ENCODE measurements at regions of chr6 and their contacts with region 1.

Region 1: DNA sequence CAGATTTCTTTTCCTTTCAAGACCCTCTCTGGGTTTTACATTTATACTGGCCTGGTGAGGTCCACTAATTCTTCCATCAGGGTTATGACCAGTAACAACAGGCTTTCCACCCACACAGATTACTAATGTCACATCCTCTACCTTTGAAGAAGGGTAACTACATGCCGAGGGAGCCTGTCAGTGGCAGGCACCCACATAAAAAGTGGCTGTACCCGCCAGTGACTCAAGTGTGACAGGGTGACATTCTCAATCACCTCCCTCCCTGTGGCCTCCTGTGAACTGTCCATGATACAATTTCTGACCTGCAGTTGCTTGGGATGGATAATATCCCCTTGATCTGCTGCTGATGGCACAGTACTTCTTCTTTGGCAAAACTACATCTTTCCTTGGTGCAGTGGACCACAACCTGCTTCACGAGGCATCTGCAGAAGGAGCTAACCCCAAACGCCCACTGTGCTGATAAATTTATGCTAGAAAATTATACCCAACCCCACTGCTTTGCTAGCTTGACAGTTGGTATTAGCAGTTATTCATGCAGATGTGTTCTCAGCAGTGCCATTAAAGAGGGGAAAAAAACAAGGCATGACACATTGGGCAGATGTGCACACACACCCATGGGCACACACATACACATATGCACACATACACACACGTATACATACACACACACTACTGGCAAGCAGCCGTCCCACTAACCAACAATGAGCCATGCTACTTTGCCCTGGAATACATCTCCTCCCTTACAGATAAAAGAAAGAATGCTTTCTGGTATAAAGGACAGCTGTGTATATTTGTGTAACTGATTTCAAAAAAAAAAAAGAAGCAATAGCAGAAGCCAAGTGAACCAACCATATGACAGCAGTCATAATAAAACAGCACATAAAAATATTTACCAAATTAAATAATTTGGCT is 20.8 kb downstream of the GFOD1 start:
- H3K4me3 Mint-ChIP-seq: peak overlapping the region; percentile 23
- H3K27ac Mint-ChIP-seq: peak overlapping the region; percentile 92
- H3K4me1 Mint-ChIP-seq: peaks cover 88% of the 10 kb centered on the region
- H3K27me3 Mint-ChIP-seq: no peaks in the 10 kb centered on the region

Region 2: DNA sequence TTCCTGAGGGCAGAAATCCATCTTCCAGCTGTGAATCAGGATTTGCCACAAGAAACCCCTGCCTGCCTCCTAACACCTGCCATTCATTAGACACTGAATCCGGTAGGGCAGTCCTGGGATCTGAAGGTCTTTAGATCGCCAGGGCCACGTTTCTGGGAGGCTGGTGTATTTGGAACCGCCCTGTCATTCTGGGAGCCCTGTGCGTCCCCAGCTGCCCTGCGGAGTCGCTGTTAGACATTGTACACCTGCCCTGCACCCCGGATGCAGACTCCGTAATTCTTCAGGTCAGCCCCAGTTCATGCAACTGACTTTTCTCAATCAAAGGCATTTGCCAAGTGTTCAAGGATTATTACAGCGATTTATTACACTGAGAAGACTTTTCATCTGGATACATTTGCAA is 331.4 kb before region 1 on chr6:
- intact Hi-C with region 1: no loop called
- H3K4me3 Mint-ChIP-seq: no peak overlapping the region
- H3K27ac Mint-ChIP-seq: no peak overlapping the region
- H3K4me1 Mint-ChIP-seq: peaks cover 5% of the 10 kb centered on the region
- H3K27me3 Mint-ChIP-seq: no peaks in the 10 kb centered on the region

Region 3: GRCh38 chr6:13217206-13217905 is 249.2 kb before region 1 on chr6:
- intact Hi-C with region 1: no loop called
- H3K4me3 Mint-ChIP-seq: no peak overlapping the region
- H3K27ac Mint-ChIP-seq: no peak overlapping the region
- H3K4me1 Mint-ChIP-seq: no peaks in the 10 kb centered on the region
- H3K27me3 Mint-ChIP-seq: no peaks in the 10 kb centered on the region

Region 4: DNA sequence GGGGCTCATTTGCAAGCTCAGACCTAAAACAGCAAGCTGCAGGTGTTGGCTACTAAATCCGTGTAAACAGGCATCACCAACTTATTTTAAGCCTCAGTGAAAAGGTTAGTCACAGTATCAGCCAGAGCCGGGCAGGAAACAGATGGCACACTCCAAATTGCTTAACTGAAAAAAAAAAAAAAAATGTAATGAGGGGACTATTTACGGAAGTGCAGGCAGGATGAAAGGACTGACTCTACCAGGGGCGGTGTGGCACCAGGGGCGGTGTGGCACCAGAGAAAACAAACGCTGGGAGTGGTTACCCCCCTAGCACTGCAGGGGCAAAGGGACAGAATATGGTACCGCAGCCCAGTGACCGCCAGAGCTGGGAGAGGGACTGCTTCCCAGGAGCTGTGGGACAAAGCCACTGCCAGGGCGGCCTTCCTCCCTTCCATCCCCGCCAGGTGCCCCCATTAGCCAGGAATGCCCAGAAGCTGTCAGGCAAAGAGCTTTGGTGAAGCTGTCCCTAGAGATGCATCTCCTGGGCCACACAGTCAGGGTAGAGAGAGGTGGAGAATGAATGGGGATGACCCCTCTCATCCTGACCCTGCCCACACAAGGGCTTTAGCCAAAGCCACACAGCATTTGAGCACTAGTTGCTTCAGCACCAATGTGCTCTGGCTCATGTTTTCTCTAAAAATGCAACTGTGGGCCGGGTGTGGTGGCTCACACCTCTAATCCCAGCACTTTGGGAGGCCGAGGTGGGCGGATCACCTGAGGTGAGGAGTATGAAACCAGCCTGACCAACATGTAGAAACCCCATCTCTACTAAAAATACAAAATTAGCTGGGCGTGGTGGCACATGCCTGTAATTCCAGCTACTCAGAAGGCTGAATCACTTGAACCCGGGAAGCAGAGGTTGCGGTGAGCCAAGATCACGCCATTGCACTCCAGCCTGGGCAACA is 60.4 kb after region 1 on chr6:
- intact Hi-C with region 1: loop called (anchors 10 kb)
- H3K4me3 Mint-ChIP-seq: peak overlapping the region; percentile 6
- H3K27ac Mint-ChIP-seq: peak overlapping the region; percentile 84
- H3K4me1 Mint-ChIP-seq: peaks cover 40% of the 10 kb centered on the region
- H3K27me3 Mint-ChIP-seq: no peaks in the 10 kb centered on the region

Measured in dendritic cell treated with granulocyte-macrophage colony-stimulating factor and Interleukin-4, amounts not matched to agents 40 ng/mL and 50 ng/mL, for 4 days (primary cell).